ENCODE measurements at regions of chr21 and their contacts with region 1.

Region 1: DNA sequence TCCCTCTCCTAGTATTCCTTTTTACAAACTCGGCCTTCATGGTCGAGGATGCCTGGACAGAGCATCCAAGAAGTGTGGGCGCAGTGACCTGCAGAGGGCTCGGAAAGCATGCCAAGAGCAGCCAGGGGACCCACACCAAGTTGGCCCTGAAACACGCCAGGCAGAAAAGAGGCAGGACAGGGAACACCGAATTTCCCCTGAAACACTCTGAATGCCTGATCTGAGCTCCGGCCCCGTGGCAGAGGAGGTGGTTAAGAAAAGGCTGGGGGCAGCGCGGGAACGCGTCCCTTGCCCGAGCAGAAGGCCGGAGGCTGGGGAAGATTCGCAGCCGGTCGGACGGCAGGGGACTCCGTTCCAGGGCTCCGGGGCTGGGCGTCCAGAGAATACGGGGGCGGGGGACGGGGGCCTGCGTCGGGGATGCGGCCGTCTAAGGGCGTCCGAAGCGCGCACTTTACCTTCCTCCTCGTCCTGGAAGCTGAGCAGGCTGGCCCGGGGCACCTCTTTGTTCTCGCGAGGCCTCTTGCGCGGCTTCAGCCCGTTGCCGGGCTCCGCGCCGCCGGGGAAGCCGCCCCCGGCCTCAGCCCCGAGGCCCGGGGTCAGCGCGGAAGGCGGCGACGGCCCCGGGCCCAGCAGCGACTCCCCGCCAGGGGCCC is 558 bp downstream of the PAXBP1 start:
- DNase-seq: peak in 1 of 2 experiments; percentile 69
- H3K4me3 ChIP-seq: peak overlapping the region; percentile 88
- H3K4me1 ChIP-seq: peaks cover 18% of the 10 kb centered on the region
- H3K27me3 ChIP-seq: no peaks in the 10 kb centered on the region

Region 2: DNA sequence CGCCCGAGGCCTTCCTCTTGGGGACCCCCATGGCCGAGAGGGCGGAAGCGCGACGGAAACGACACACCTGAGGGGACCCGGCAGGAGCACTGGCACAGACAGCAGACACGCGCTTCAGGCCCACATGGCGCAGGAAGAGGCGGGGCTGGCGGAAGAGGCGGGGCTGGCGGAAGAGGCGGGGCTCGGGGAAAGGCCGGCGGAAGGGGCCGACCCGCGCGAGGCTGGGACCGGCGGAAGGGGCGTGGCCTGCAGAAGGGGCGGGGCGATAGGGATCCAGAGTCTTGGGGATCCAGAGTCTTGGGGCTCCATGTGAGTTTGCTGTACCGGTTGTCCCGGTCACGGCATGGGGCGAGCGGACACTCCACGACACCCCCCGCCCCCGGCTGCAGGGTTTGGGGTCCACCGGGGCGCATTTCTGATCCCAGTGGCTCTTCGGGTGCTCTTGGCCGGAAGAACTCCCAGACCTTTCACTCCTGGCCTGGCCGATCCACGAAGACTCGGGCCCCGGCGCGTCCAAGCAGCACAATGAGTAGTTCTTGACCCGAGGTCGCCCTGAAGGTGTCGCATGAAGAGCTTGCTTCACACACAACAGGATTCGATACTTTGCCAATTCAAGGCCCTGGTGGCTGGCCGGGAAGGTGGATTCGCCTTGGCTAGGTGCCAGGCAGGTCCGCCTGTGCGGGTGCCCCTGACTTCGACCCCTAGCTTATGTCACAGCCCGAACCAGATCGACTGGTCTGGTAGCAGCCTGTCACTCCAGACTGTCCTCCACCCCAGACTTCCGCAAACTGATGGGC is 377.9 kb before region 1 on chr21 and contains the start of gene URB1:
- in situ Hi-C with region 1: loop called (anchors 25 kb)
- DNase-seq: peak; percentile 70 to 96
- H3K4me3 ChIP-seq: peak within 1 kb of the TSS; percentile 93
- H3K4me1 ChIP-seq: peaks cover 3% of the 10 kb centered on the region; the same call in 1 of the 2 replicates
- H3K27me3 ChIP-seq: peaks cover under 1% of the 10 kb centered on the region; the same call in 1 of the 2 replicates

Region 3: GRCh38 chr21:33884376-33885171 is 1113.6 kb after region 1 on chr21:
- in situ Hi-C with region 1: no loop called
- DNase-seq: no peak
- H3K4me3 ChIP-seq: no peak overlapping the region
- H3K4me1 ChIP-seq: peaks cover 5% of the 10 kb centered on the region; the same call in 1 of the 2 replicates
- H3K27me3 ChIP-seq: no peaks in the 10 kb centered on the region